ENCODE measurements at regions of chr12 and their contacts with region 1.

Region 1: DNA sequence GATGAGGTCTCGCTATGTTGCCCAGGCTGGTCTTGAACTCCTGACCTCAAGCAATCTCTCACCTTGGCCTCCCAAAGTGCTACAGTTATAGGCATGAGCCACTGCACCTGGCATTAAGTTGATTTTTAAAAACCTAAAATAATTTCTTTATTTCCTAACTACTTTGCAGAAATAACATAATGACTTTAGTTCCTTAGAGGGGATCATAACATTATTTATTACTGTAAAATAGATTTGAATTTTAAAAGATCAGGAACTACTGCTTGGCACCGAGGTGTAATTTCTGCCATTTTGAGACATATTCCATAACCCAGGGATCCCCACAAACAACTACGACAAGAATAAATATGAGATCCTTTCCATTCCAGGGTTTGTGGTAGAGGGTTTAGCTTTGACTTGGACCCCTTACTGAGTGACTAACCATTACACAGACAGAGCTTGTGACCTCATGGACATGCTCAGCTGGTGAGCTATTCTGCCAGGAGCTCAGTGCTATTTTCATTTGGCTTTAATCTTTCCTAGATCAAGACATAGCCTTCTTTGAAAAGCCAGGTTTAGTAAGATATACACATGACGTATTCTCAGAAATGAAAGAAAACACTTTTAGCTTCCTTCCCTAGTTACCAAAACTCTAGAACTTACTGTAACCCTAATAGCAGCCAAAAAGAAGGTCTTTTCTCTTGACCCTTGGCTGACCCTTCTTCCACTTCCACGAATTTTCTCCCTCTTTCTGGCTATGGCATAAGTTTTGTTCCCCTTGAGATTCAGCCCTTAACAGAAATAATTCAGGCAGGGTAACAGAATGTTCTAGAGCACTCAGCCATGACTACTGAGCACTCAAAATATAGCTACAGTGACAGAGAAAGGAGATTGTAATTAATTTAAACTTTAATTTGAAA is 75.1 kb upstream of the NUDT4 start:
- DNase-seq: no peak
- ATAC-seq: peak; percentile 80

Region 2: DNA sequence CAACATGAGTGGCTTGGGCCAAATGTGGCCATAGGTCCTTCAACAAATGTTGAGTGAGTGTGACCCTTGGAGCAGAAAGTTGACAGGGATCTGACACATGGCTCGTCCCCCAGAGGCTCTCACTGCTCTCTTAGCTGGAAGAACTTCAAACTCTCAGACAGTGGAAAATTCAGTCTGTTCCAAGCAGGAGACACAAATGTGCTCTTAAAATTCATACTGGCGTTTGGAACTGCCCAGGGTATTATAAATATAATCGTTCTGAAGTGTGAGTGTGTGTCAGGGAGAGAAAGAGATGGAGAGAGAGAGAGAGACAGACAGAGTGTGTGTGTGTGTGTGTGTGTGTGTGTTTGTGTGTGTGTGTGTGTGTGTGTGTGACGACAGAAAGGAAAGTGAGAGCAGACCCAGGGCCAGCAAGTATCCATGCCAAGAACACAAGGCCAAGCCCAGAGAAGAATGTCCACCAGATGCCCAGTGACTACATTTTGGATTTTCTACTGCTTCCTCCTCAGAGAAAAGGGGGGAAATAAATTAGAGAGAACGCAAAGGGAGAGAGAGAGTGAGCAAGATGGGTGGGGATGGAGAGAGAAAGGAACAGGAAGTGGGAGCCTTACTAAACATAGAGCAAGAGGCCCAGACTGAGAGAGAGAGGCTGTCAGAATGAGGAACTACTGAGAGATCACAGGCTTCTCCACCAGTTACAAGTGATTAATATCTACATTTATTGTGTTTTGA is 118.5 kb before region 1 on chr12:
- intact Hi-C with region 1: loop called (anchors 5 kb)
- DNase-seq: no peak
- ATAC-seq: peak; percentile 87

Region 3: GRCh38 chr12:93352321-93352720 is 49.7 kb after region 1 on chr12:
- intact Hi-C with region 1: loop called (anchors 5 kb)
- DNase-seq: no peak
- ATAC-seq: no peak

Measured in Right ventricle myocardium inferior (tissue), 1 donor.